Left ventricle myocardium inferior (tissue), 1 donor: ENCODE measurements at regions of chr11 and their contacts with region 1.

Region 1: DNA sequence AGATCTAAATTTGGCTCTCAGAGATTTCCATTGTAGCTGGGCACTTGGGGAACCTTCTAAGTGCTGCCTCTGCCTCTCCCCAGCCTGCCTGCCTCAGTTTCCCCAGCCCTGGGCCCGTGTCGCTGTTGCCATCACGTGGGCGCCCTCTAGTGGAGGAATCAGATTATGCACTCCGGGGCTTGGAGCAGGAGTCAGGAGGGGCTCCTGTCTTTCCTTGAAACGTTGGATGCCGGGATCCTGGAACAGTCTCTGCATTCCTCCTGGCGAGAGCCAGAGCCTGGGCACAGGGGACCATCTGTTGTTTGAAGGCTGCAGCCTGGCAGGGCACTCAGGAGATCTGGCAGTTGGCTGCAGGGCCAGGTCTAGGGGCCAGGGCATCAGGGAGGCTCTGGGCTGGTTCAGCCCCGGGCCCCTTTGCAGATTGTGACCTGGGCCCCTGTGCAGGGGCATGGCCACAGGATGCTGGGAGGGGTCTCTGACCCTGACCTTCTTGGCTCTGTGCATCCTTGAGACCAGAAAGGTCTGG is 71.6 kb downstream of the LRP5 start:
- DNase-seq: peak; percentile 71
- H3K4me3 ChIP-seq: no peak overlapping the region
- H3K27ac ChIP-seq: peak overlapping the region; percentile 87
- H3K4me1 ChIP-seq: peaks cover 53% of the 10 kb centered on the region
- H3K27me3 ChIP-seq: no peaks in the 10 kb centered on the region
- CTCF ChIP-seq: peak; percentile 92

Region 2: GRCh38 chr11:68090706-68091105 is 293.3 kb before region 1 on chr11:
- intact Hi-C with region 1: no loop called
- DNase-seq: no peak
- H3K4me3 ChIP-seq: no peak overlapping the region
- H3K27ac ChIP-seq: peak overlapping the region; percentile 13
- H3K4me1 ChIP-seq: peaks cover 30% of the 10 kb centered on the region
- H3K27me3 ChIP-seq: no peaks in the 10 kb centered on the region
- CTCF ChIP-seq: no peak

Region 3: GRCh38 chr11:68312117-68312779 is 71.8 kb before region 1 on chr11 and contains the start of gene LRP5:
- intact Hi-C with region 1: loop called (anchors 5 kb)
- DNase-seq: peak; percentile 36
- H3K4me3 ChIP-seq: peak within 1 kb of the TSS; percentile 84
- H3K27ac ChIP-seq: peak within 1 kb of the TSS; percentile 94
- H3K4me1 ChIP-seq: peaks cover 55% of the 10 kb centered on the region
- H3K27me3 ChIP-seq: no peaks in the 10 kb centered on the region
- CTCF ChIP-seq: no peak
- total RNA-seq, gene LRP5: 54.7 TPM

Region 4: DNA sequence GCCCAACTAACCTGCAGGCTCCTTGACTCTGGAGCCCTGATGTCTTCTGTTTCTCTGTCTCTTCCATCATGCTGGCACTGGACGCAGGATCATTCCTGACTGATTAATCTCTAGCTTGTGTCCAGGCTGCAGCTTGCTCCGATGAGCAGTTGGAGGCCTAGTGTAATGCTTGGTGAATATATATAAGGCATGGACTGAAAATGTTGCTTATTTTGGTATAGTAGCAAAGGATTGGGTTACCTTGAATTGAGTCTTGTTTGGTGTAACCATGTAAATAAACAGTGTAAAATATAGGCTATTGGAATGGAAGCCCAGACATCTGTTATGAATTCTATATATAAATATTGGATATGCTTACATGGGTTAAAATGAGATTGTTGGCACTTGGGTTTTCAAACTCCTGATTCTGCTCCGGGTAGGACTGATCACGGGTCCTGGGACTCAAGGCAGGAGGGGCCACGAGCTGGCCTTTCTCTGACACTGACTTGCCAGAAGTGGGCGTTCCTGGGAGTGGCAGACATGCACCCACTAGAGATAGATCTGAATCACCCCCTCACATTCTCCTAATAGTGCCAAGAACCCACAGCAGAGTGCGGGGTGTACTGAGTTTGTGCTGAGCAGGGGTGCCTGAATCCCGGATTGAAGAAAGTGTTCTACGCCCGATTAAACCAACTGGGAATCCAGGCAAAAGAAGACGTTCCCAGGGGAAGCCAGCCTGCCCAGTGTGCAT is 45.8 kb before region 1 on chr11:
- intact Hi-C with region 1: no loop called
- DNase-seq: no peak
- H3K4me3 ChIP-seq: peak overlapping the region; percentile 35
- H3K27ac ChIP-seq: peak overlapping the region; percentile 73
- H3K4me1 ChIP-seq: peaks cover 84% of the 10 kb centered on the region
- H3K27me3 ChIP-seq: no peaks in the 10 kb centered on the region
- CTCF ChIP-seq: no peak